ENCODE measurements at regions of chr2 and their contacts with region 1.

Region 1: GRCh38 chr2:98731041-98731893 is at the start of gene MGAT4A:
- DNase-seq: peak; percentile 62
- H3K4me3 Mint-ChIP-seq: peak within 1 kb of the TSS; percentile 65
- H3K27ac Mint-ChIP-seq: no peak within 1 kb of the TSS
- H3K4me1 Mint-ChIP-seq: peaks cover 16% of the 10 kb centered on the region
- H3K27me3 Mint-ChIP-seq: no peaks in the 10 kb centered on the region
- CTCF ChIP-seq: no peak
- total RNA-seq, gene MGAT4A: 21.8 and 23.0 TPM in 2 replicates

Region 2: GRCh38 chr2:98664327-98664726 is 66.9 kb before region 1 on chr2:
- CTCF ChIA-PET with region 1: no interaction called
- intact Hi-C with region 1: loop called (anchors 5 kb)
- DNase-seq: peak; percentile 36
- H3K4me3 Mint-ChIP-seq: no peak overlapping the region
- H3K27ac Mint-ChIP-seq: no peak overlapping the region
- H3K4me1 Mint-ChIP-seq: no peaks in the 10 kb centered on the region
- H3K27me3 Mint-ChIP-seq: no peaks in the 10 kb centered on the region
- CTCF ChIP-seq: no peak

Region 3: GRCh38 chr2:98805412-98806171 is 74.3 kb after region 1 on chr2:
- CTCF ChIA-PET with region 1: no interaction called
- intact Hi-C with region 1: loop called (anchors 10 kb)
- DNase-seq: no peak
- H3K4me3 Mint-ChIP-seq: no peak overlapping the region
- H3K27ac Mint-ChIP-seq: no peak overlapping the region
- H3K4me1 Mint-ChIP-seq: peaks cover 22% of the 10 kb centered on the region
- H3K27me3 Mint-ChIP-seq: no peaks in the 10 kb centered on the region
- CTCF ChIP-seq: no peak

Measured in Calu3 (cell line).